Right ventricle myocardium inferior (tissue), 1 donor: ENCODE measurements at regions of chr1 and their contacts with region 1.

Region 1: GRCh38 chr1:19179597-19180264 is 30.3 kb downstream of the UBR4 start:
- DNase-seq: no peak
- ATAC-seq: no peak

Region 2: DNA sequence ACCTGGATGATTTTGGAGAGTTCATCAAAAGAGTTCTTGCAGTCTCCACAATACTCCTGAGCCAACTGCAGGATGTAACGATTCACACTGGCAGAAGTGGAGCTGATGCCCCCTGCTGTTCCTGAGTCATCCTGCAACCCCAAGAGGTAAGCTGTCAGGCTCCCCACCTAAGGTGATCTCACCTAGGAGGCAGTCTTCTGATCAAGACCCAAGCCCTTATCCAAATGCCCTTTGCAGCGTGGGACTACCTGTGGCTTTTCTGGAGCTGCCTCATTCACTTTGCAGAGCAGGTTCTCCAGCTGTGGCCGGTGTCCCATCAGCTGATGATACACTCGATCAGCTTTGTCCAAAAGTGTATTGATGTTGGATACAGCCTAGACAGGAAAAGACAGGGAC is 66.0 kb before region 1 on chr1:
- intact Hi-C with region 1: no loop called
- DNase-seq: no peak
- ATAC-seq: no peak

Region 3: DNA sequence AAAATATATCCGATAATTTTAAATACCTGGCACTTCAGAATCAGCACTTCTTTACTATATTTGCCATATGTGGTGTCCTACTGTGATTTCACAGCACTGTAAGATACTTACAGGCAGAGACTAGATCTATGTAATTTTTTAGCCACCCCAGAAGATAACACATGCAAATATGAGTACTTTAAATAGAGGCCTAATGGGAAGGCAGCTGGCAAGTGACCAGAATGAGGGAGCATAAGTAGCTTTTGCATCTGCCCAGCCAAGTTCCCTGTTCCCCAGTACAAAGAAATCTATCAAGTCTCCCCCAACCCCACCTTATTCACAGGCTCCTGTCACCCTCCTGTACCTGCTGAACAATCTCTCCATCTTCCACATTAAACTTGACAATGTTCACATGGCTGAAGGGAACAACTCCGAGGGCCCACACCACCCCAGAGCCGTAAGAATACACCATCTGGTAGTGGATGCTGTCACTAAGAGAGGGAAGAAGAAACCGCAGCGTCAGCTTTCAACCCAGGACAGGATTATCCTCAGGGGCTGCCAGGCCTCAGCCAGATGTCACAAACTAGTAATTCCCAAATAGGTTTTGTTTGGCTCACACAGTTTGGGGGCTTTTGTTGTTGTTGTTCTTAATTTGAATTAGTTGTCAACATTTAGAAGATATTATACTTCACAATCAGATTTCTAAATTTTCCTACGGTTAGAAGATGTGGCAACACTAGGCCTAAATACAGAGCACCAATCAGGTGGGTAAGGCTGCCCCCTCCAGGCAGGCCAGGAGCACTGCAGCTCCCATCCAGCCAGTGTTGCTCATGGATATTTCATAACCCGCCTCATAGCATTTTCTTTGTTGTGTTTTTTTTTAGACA is 61.2 kb after region 1 on chr1:
- intact Hi-C with region 1: loop called (anchors 2 kb)
- DNase-seq: peak; percentile 80
- ATAC-seq: peak; percentile 88